ENCODE measurements at regions of chr6 and their contacts with region 1.

Region 1: DNA sequence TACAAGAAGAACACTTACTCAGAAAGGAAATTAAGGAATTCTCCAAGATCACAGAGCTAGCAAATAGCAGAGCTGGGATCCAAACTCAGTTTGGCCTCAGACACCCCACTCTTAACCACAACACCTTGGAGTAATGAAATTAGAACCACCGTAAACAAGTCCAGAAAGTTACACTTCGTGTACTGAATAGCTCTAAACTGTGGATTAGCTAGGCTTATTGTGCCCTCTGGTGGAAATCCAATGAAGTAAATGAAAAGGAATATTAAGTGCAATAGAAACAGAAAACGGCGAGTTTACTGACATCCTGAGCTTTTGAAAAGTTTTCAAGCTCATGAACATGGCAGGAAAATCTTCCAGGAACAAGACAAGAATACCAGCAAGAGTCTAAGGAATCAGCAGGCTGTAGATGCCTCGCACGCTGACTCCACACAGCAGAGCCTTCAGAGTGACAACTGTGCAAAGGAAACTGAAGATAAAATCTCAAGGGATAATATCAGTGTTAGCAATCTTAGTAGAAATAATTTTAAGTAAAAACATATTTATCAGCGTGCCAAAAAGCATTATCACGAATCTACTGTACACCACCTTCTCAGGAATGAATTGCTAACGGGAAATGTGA is 34.6 kb downstream of the FBXO5 start:
- DNase-seq: peak; percentile 52
- ATAC-seq: peak; percentile 81
- H3K4me3 ChIP-seq: no peak overlapping the region
- H3K27ac ChIP-seq: no peak overlapping the region
- H3K4me1 ChIP-seq: no peaks in the 10 kb centered on the region
- H3K27me3 ChIP-seq: no peaks in the 10 kb centered on the region
- CTCF ChIP-seq: peak; percentile 70
- POLR2A ChIP-seq: no peak
- RAD21 ChIP-seq: peak; percentile 78

Region 2: DNA sequence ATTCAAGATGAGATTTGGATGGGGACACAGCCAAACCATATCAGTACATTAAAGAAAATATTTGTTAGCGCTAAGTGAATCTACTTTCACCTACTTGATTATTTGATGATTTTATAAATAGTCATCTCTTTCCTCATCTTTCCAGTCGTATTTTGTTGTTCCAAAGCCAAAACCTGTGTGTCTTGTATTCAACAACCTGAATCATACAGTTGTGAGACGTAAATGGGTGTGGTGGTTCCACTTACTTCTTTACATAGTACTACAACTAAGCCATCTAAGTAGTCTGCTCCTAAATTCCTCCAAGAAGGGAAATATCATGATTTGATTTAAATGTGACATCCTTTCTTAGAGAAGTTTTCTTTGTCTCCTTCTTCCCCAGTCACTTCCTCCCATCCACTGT is 1008.0 kb before region 1 on chr6:
- CTCF ChIA-PET with region 1: no interaction called
- POLR2A ChIA-PET with region 1: no interaction called
- dilution Hi-C with region 1: no loop called
- in situ Hi-C with region 1: no loop called
- intact Hi-C with region 1: no loop called
- DNase-seq: no peak
- ATAC-seq: no peak
- H3K4me3 ChIP-seq: no peak overlapping the region
- H3K27ac ChIP-seq: no peak overlapping the region
- H3K4me1 ChIP-seq: no peaks in the 10 kb centered on the region
- H3K27me3 ChIP-seq: no peaks in the 10 kb centered on the region
- CTCF ChIP-seq: no peak
- POLR2A ChIP-seq: no peak
- RAD21 ChIP-seq: no peak

Region 3: GRCh38 chr6:152301764-152302568 is 646.3 kb before region 1 on chr6:
- CTCF ChIA-PET with region 1: no interaction called
- POLR2A ChIA-PET with region 1: no interaction called
- dilution Hi-C with region 1: no loop called
- in situ Hi-C with region 1: no loop called
- intact Hi-C with region 1: no loop called
- DNase-seq: peak; percentile 90
- ATAC-seq: peak; percentile 98
- H3K4me3 ChIP-seq: peak overlapping the region; percentile 77
- H3K27ac ChIP-seq: peak overlapping the region; percentile 86
- H3K4me1 ChIP-seq: peaks cover 5% of the 10 kb centered on the region; the same call in 1 of the 2 replicates
- H3K27me3 ChIP-seq: no peaks in the 10 kb centered on the region
- CTCF ChIP-seq: peak; percentile 49
- POLR2A ChIP-seq: peak; percentile 77
- RAD21 ChIP-seq: peak; percentile 37

Region 4: GRCh38 chr6:152471456-152472265 is 476.6 kb before region 1 on chr6:
- CTCF ChIA-PET with region 1: no interaction called
- POLR2A ChIA-PET with region 1: no interaction called
- dilution Hi-C with region 1: no loop called
- in situ Hi-C with region 1: loop called (anchors 10 kb)
- intact Hi-C with region 1: no loop called
- DNase-seq: peak; percentile 49
- ATAC-seq: peak; percentile 89
- H3K4me3 ChIP-seq: peak overlapping the region; percentile 50; the same call in 1 of the 2 replicates
- H3K27ac ChIP-seq: peak overlapping the region; percentile 37; the same call in 1 of the 2 replicates
- H3K4me1 ChIP-seq: no peaks in the 10 kb centered on the region
- H3K27me3 ChIP-seq: no peaks in the 10 kb centered on the region
- CTCF ChIP-seq: no peak
- POLR2A ChIP-seq: no peak
- RAD21 ChIP-seq: no peak

Region 5: DNA sequence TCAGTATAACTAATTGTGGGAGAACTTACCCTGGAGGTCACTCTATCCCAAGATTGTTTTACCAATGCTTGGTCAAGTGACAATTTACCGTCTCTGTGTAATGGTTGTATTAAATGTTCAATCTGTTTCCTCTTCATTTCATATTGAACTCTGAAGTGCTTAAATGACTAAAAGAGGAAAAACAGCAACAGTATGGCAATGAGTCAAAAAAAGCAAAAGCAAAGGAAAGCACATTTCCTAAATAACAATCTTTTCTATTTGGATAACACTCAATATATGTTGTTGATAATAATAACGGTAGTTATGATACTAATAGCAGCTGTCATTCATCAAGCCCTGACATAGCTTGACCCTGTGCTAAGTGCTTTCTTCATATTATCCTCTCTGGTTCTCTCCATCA is 463.5 kb before region 1 on chr6:
- CTCF ChIA-PET with region 1: no interaction called
- POLR2A ChIA-PET with region 1: no interaction called
- dilution Hi-C with region 1: no loop called
- in situ Hi-C with region 1: no loop called
- intact Hi-C with region 1: loop called (anchors 10 kb)
- DNase-seq: no peak
- ATAC-seq: no peak
- H3K4me3 ChIP-seq: no peak overlapping the region
- H3K27ac ChIP-seq: no peak overlapping the region
- H3K4me1 ChIP-seq: no peaks in the 10 kb centered on the region
- H3K27me3 ChIP-seq: no peaks in the 10 kb centered on the region
- CTCF ChIP-seq: no peak
- POLR2A ChIP-seq: no peak
- RAD21 ChIP-seq: no peak

Region 6: GRCh38 chr6:152750694-152751093 is 197.6 kb before region 1 on chr6 and contains the start of gene VIP:
- CTCF ChIA-PET with region 1: no interaction called
- POLR2A ChIA-PET with region 1: no interaction called
- dilution Hi-C with region 1: no loop called
- in situ Hi-C with region 1: loop called (anchors 10 kb)
- intact Hi-C with region 1: loop called (anchors 2 kb)
- DNase-seq: peak; percentile 42
- ATAC-seq: peak; percentile 81
- H3K4me3 ChIP-seq: no peak within 1 kb of the TSS
- H3K27ac ChIP-seq: no peak within 1 kb of the TSS
- H3K4me1 ChIP-seq: no peaks in the 10 kb centered on the region
- H3K27me3 ChIP-seq: no peaks in the 10 kb centered on the region
- CTCF ChIP-seq: no peak
- POLR2A ChIP-seq: no peak
- RAD21 ChIP-seq: no peak
- total RNA-seq, gene VIP: not detected in 2 replicates

Region 7: DNA sequence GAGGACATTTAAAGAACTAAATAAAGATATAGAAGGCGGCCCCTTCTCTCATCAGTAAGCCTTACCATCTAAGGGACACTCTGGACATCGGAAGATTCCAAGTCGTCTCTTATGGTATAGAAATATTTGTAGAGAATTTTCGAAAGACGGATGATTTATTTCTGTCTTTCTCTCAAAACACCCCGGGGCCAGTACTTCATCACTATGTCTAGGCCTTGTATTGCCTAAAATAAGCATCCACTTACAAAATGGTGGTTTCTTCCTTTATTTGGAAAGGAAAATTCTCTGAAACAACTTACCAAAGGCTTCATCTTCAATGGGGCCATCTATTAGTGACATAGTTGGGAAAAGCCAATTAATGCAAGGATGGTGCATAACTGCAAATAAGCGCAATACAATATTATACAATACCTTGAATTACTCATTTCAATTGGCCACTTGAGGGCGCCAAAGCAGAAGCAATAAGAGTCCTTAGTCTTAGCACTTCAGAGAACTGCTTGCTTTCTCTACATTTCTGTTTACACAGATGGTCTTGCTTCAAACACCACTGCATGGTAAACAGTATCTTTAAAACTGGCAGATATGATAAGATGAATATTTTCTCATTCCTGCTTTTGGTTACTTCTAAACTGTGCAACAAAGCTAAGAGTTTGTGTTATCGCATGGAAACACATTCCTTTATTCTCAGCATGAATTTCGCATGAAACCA is 84.5 kb before region 1 on chr6:
- CTCF ChIA-PET with region 1: interaction called, 12 read pairs
- POLR2A ChIA-PET with region 1: no interaction called
- dilution Hi-C with region 1: no loop called
- in situ Hi-C with region 1: loop called (anchors 10 kb)
- intact Hi-C with region 1: loop called (anchors 1 kb)
- DNase-seq: peak; percentile 74
- ATAC-seq: peak; percentile 95
- H3K4me3 ChIP-seq: no peak overlapping the region
- H3K27ac ChIP-seq: no peak overlapping the region
- H3K4me1 ChIP-seq: no peaks in the 10 kb centered on the region
- H3K27me3 ChIP-seq: no peaks in the 10 kb centered on the region; the same call in 1 of the 2 replicates
- CTCF ChIP-seq: peak; percentile 73
- POLR2A ChIP-seq: no peak
- RAD21 ChIP-seq: peak; percentile 84

Region 8: DNA sequence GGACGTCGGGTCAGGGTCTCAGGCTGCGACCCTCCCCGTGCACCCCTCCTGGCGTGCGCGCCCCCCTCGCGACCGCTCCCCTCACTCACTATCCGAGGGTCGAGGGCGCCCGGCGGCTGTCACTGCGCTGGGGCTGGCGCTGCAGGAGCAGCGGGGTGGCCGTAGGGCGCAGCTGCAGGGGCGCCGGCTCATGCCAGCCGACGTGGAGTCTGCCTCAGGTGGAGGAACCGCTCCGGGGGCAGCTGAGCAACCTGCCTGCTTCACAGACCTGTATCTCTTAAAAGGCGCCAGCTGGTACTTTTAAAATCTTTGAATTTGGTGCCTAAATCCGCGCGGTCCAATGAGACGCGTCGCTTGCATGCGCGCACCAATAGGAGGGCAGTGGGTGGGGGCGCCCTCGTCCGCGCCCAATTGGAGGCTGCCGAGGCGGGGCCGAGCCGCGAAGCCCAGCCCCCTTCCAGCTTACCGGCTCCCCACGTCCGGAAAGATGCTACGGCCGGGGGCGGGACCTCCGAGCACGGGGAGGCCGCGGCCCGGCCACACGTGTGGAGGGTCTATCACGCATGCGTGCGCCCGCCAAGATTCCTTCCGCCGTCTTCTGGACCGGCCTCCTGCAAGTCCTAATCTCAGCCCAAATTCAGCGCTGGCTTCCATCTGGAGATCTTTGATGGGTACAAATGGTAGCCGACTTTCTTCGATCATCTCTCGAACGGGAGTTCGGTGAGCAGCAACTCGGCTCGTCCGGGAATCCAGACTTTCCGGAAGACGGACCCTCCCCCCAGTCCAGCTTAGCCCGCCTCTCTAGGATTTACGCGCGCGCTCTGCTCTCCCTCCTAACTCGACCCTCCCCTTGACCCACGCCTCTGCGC is 34.7 kb after region 1 on chr6 and contains the start of gene FBXO5:
- CTCF ChIA-PET with region 1: no interaction called
- POLR2A ChIA-PET with region 1: interaction called, 10 read pairs
- dilution Hi-C with region 1: no loop called
- in situ Hi-C with region 1: no loop called
- intact Hi-C with region 1: no loop called
- DNase-seq: peak; percentile 97
- ATAC-seq: peak; percentile 94
- H3K4me3 ChIP-seq: peak within 1 kb of the TSS; percentile 73
- H3K27ac ChIP-seq: peak within 1 kb of the TSS; percentile 96
- H3K4me1 ChIP-seq: peaks cover 5% of the 10 kb centered on the region
- H3K27me3 ChIP-seq: no peaks in the 10 kb centered on the region
- CTCF ChIP-seq: no peak
- POLR2A ChIP-seq: peak; percentile 72
- RAD21 ChIP-seq: no peak
- total RNA-seq, gene FBXO5: 16.7 and 25.3 TPM in 2 replicates

Region 9: DNA sequence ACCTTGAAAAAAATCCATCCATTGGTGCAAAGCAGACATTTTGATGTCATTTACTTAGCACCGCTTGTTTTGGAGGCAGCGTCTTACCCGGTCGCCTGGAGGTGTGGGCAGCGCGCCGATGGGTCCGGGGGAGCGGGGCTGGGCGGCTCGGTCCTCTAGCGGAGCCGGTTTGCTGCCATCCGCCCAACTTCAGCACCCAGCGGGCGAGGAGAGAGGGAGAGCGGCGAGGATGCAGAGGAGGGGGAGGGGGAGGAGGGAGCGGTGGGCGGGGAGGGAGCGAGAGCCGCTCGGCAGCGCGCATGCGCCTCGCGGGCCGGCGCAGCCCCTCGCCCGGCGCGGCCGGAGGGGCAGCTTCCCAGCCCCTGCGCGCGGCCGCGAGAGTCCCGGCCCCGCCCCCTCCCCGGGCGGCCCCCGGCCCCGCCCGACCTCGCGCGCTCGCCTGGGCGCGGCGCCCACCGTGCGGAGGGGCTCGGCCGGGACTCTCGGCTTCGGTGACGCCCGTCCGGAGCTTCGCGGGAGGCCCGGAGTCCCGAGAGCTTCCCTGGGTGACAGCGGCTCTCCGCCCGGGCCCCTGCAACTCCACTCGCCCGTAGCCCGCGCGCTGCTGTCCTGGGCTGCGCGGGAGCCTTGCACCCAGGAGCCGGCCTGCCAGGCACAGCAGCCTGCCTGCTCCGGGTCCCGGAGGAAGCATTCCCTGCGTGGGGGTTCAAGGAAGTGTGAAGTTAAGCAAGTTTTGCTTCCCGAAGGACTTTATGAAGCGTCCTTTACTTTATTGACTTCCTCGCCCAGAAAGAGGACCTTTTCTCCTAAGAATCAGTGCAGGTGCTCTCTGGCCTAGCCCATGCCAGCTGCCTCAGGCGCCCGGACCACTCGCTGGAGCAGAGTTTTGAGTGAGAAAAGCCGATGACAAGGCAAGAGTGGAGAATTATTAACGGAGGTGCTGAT is 183.1 kb after region 1 on chr6 and contains the start of gene RGS17:
- CTCF ChIA-PET with region 1: no interaction called
- POLR2A ChIA-PET with region 1: no interaction called
- dilution Hi-C with region 1: no loop called
- in situ Hi-C with region 1: no loop called
- intact Hi-C with region 1: no loop called
- DNase-seq: peak; percentile 73
- ATAC-seq: peak; percentile 85
- H3K4me3 ChIP-seq: peak within 1 kb of the TSS; percentile 62
- H3K27ac ChIP-seq: peak within 1 kb of the TSS; percentile 43
- H3K4me1 ChIP-seq: no peaks in the 10 kb centered on the region; the same call in 1 of the 2 replicates
- H3K27me3 ChIP-seq: peaks cover 2% of the 10 kb centered on the region; the same call in 1 of the 2 replicates
- CTCF ChIP-seq: no peak
- POLR2A ChIP-seq: no peak
- RAD21 ChIP-seq: no peak
- total RNA-seq, gene RGS17: 1.4 and 1.7 TPM in 2 replicates

Region 10: GRCh38 chr6:153312641-153313040 is 364.4 kb after region 1 on chr6:
- CTCF ChIA-PET with region 1: no interaction called
- POLR2A ChIA-PET with region 1: no interaction called
- dilution Hi-C with region 1: no loop called
- in situ Hi-C with region 1: no loop called
- intact Hi-C with region 1: loop called (anchors 5 kb)
- DNase-seq: peak; percentile 35
- ATAC-seq: peak; percentile 61; the same call in 1 of the 2 replicates
- H3K4me3 ChIP-seq: no peak overlapping the region
- H3K27ac ChIP-seq: no peak overlapping the region
- H3K4me1 ChIP-seq: no peaks in the 10 kb centered on the region
- H3K27me3 ChIP-seq: no peaks in the 10 kb centered on the region
- CTCF ChIP-seq: peak; percentile 42
- POLR2A ChIP-seq: no peak
- RAD21 ChIP-seq: peak; percentile 50

Measured in IMR-90 (cell line).